CD4-positive, alpha-beta memory T cell (primary cell): ENCODE measurements at regions of chr3 and their contacts with region 1.

Region 1: GRCh38 chr3:38651154-38651789 is 1.8 kb upstream of the SCN5A start:
- DNase-seq: peak in 4 of 5 donors; percentile 64 to 72 (median 70)
- H3K4me3 ChIP-seq: no peak overlapping the region
- H3K4me3 Mint-ChIP-seq: peak overlapping the region in 4 of 8 donors; percentile 7 to 73 (median 53)
- H3K27ac ChIP-seq: no peak overlapping the region
- H3K27ac Mint-ChIP-seq: peak overlapping the region in 2 of 7 donors; percentile 49 to 76
- H3K4me1 ChIP-seq: peaks cover 22% of the 10 kb centered on the region
- H3K4me1 Mint-ChIP-seq: peaks cover 6 to 10% (median 8%) of the 10 kb centered on the region in 4 donors
- H3K27me3 ChIP-seq: peaks cover 10% of the 10 kb centered on the region
- H3K27me3 Mint-ChIP-seq: peaks cover 8 to 26% of the 10 kb centered on the region in 2 donors

Region 2: GRCh38 chr3:38634111-38634510 is 17.2 kb before region 1 on chr3:
- CTCF ChIA-PET with region 1: interaction called, 12 read pairs
- POLR2A ChIA-PET with region 1: no interaction called
- intact Hi-C with region 1: no loop called
- DNase-seq: no peak
- H3K4me3 ChIP-seq: no peak overlapping the region
- H3K4me3 Mint-ChIP-seq: no peak overlapping the region
- H3K27ac ChIP-seq: no peak overlapping the region
- H3K27ac Mint-ChIP-seq: peak overlapping the region in 2 of 7 donors; percentile 9 to 35
- H3K4me1 ChIP-seq: no peaks in the 10 kb centered on the region
- H3K4me1 Mint-ChIP-seq: peaks cover 0 to 6% (median under 1%) of the 10 kb centered on the region in 4 donors
- H3K27me3 ChIP-seq: no peaks in the 10 kb centered on the region
- H3K27me3 Mint-ChIP-seq: peaks cover 0 to 4% of the 10 kb centered on the region in 2 donors

Region 3: DNA sequence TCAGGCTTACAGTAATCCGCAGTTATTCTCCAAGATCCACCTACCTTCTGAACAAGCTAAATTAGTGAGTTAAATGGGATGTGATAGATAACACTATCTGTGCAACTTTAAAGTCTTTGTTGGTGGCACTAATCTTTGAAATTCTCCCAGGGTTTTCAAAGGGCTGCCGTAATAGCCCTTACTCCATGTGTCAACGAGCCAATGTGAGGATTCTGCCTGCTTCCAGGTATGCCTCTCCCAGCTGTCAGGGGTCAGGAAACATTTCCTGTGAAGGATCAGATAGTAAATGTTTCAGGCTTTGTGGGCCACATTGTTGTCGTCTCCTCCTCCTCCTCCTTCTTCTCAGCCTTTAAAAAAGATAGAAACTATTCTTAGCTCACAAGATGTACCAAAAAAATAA is 18.4 kb after region 1 on chr3:
- CTCF ChIA-PET with region 1: interaction called, 12 read pairs
- POLR2A ChIA-PET with region 1: no interaction called
- intact Hi-C with region 1: no loop called
- DNase-seq: no peak
- H3K4me3 ChIP-seq: no peak overlapping the region
- H3K4me3 Mint-ChIP-seq: no peak overlapping the region
- H3K27ac ChIP-seq: no peak overlapping the region
- H3K27ac Mint-ChIP-seq: no peak overlapping the region
- H3K4me1 ChIP-seq: no peaks in the 10 kb centered on the region
- H3K4me1 Mint-ChIP-seq: no peaks in the 10 kb centered on the region
- H3K27me3 ChIP-seq: no peaks in the 10 kb centered on the region
- H3K27me3 Mint-ChIP-seq: peaks cover 7 to 22% of the 10 kb centered on the region in 2 donors